IMR-90 (cell line): ENCODE measurements at regions of chr4 and their contacts with region 1.

Region 1: DNA sequence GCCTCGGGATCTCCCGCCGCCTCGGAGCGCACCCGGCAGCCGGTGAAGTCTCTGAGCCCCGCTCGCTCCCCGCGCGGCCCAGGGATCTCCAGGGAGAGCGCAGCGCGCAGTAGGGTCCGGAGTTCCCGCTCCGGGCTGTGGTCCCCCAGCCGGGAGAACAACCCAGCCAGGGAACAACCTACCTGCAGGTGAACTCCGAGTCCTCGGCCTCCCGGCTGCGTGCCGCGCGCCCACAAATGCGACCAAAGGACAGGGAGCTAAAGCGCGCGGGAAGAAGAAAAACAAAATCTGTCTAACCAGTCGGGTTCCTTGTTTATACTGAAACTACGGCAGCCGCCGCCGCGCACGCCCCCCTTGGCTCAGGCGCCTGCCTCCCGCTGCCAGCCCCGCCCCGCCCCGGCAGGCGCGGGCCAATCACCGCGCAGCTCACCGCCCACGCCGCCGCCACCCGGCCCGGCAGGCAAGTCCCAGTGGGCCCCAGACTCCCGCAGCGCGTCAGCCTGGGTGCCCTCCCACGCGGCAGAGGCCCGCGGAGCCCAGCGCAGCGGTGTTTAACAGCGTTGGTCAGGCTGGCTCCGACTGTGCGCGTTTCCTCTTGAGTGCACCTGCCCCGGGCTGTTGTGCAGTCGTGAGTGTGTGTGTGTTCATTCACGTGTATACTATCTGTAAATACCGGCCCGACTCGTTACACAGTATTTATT is at the start of gene RASGEF1B:
- DNase-seq: peak; percentile 62
- ATAC-seq: peak; percentile 95
- H3K4me3 ChIP-seq: peak within 1 kb of the TSS; percentile 77
- H3K27ac ChIP-seq: no peak within 1 kb of the TSS
- H3K4me1 ChIP-seq: peaks cover 2% of the 10 kb centered on the region; the same call in 1 of the 2 replicates
- H3K27me3 ChIP-seq: peaks cover 27% of the 10 kb centered on the region
- CTCF ChIP-seq: no peak
- POLR2A ChIP-seq: no peak
- RAD21 ChIP-seq: no peak
- total RNA-seq, gene RASGEF1B: 0.28 and 0.36 TPM in 2 replicates

Region 2: DNA sequence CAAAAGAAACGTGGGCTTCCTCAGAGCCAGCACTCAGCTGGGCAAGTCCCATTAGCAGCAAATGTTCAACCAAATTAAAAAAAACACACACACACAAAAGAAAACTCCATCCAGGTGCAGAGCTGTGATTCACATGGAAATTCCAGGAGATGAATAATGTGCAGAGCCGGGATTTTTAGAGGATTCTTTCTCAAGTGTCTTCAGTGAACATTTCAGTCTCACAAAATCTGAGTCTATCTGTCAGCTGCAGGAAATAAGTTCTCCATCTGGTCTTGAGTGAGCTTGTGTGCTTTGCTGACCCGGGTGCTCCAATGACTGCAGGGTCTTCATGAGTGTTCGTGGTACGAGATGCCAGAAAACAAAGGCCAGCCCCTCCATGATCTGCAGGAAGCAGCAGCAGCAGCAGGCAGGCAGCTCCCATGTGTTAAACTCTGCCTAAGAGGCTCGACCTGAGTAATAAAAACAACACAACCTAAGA is 44.4 kb before region 1 on chr4:
- CTCF ChIA-PET with region 1: interaction called, 4 read pairs
- POLR2A ChIA-PET with region 1: no interaction called
- dilution Hi-C with region 1: no loop called
- in situ Hi-C with region 1: no loop called
- intact Hi-C with region 1: loop called (anchors 5 kb)
- DNase-seq: peak; percentile 34
- ATAC-seq: peak; percentile 35; the same call in 1 of the 2 replicates
- H3K4me3 ChIP-seq: no peak overlapping the region
- H3K27ac ChIP-seq: peak overlapping the region; percentile 88; the same call in 1 of the 2 replicates
- H3K4me1 ChIP-seq: peaks cover 15% of the 10 kb centered on the region
- H3K27me3 ChIP-seq: no peaks in the 10 kb centered on the region
- CTCF ChIP-seq: no peak
- POLR2A ChIP-seq: no peak
- RAD21 ChIP-seq: no peak

Region 3: GRCh38 chr4:81609844-81610243 is 138.1 kb after region 1 on chr4:
- CTCF ChIA-PET with region 1: no interaction called
- POLR2A ChIA-PET with region 1: no interaction called
- dilution Hi-C with region 1: no loop called
- in situ Hi-C with region 1: no loop called
- intact Hi-C with region 1: no loop called
- DNase-seq: no peak
- ATAC-seq: no peak
- H3K4me3 ChIP-seq: no peak overlapping the region
- H3K27ac ChIP-seq: no peak overlapping the region
- H3K4me1 ChIP-seq: no peaks in the 10 kb centered on the region
- H3K27me3 ChIP-seq: no peaks in the 10 kb centered on the region
- CTCF ChIP-seq: no peak
- POLR2A ChIP-seq: no peak
- RAD21 ChIP-seq: no peak

Region 4: GRCh38 chr4:81688085-81688484 is 216.3 kb after region 1 on chr4:
- CTCF ChIA-PET with region 1: interaction called, 3 read pairs
- POLR2A ChIA-PET with region 1: no interaction called
- dilution Hi-C with region 1: no loop called
- in situ Hi-C with region 1: no loop called
- intact Hi-C with region 1: loop called (anchors 2 kb)
- DNase-seq: no peak
- ATAC-seq: peak; percentile 71
- H3K4me3 ChIP-seq: no peak overlapping the region
- H3K27ac ChIP-seq: no peak overlapping the region
- H3K4me1 ChIP-seq: no peaks in the 10 kb centered on the region
- H3K27me3 ChIP-seq: no peaks in the 10 kb centered on the region
- CTCF ChIP-seq: 0 out of 2 replicates have a peak, but pooled peaks have one; percentile 13
- POLR2A ChIP-seq: no peak
- RAD21 ChIP-seq: no peak

Region 5: GRCh38 chr4:82201805-82202641 is 730.3 kb after region 1 on chr4:
- CTCF ChIA-PET with region 1: interaction called, 3 read pairs
- POLR2A ChIA-PET with region 1: no interaction called
- dilution Hi-C with region 1: no loop called
- in situ Hi-C with region 1: no loop called
- intact Hi-C with region 1: loop called (anchors 1 kb)
- DNase-seq: peak; percentile 27
- ATAC-seq: peak; percentile 46; the same call in 1 of the 2 replicates
- H3K4me3 ChIP-seq: no peak overlapping the region
- H3K27ac ChIP-seq: no peak overlapping the region
- H3K4me1 ChIP-seq: no peaks in the 10 kb centered on the region
- H3K27me3 ChIP-seq: no peaks in the 10 kb centered on the region
- CTCF ChIP-seq: peak; percentile 61
- POLR2A ChIP-seq: no peak
- RAD21 ChIP-seq: peak; percentile 80

Region 6: DNA sequence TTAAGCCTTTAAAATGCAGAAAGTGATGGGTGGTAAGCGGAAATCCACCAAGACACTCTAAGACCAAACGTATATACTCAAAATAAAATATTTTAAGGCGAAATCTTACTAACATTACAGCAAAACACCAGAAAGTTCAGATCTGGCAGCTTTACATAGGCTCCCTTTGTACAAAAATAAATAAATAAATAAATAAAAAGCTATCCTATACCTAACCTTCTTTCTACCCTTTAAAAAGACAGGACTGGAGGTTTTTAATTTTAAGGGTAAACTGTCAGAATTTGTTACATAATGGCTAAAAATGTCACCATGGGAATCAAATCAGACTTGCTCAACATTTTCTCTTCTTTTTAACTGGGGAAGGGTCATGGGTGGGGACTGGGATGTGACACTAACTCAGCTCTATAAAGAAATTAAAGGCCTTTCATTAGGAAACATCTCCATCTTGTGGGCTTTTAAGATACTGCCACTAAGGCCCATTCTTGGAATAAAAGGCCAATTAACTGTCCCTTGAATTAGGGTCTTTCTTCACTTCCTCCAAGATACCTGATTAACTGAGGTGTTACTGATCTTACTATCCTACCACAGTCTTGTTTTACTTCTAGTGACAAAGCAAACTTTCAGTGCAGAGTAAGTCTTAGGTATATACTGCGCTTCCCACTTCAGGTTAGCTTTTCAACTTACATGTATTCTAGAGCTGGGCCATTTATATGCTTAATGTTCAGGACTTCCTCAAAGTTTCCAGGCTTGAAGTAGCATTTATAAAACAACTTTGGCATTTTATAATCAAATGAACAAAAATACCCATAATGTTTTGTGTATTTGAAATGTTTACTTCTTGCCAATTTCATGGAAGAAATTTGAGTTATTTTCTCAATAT is 888.8 kb after region 1 on chr4:
- CTCF ChIA-PET with region 1: no interaction called
- POLR2A ChIA-PET with region 1: no interaction called
- dilution Hi-C with region 1: no loop called
- in situ Hi-C with region 1: no loop called
- intact Hi-C with region 1: loop called (anchors 5 kb)
- DNase-seq: peak; percentile 29
- ATAC-seq: peak; percentile 69
- H3K4me3 ChIP-seq: no peak overlapping the region
- H3K27ac ChIP-seq: no peak overlapping the region
- H3K4me1 ChIP-seq: peaks cover 7% of the 10 kb centered on the region
- H3K27me3 ChIP-seq: no peaks in the 10 kb centered on the region
- CTCF ChIP-seq: peak; percentile 62
- POLR2A ChIP-seq: no peak
- RAD21 ChIP-seq: peak; percentile 54